ENCODE measurements at regions of chrX and their contacts with region 1.

Region 1: DNA sequence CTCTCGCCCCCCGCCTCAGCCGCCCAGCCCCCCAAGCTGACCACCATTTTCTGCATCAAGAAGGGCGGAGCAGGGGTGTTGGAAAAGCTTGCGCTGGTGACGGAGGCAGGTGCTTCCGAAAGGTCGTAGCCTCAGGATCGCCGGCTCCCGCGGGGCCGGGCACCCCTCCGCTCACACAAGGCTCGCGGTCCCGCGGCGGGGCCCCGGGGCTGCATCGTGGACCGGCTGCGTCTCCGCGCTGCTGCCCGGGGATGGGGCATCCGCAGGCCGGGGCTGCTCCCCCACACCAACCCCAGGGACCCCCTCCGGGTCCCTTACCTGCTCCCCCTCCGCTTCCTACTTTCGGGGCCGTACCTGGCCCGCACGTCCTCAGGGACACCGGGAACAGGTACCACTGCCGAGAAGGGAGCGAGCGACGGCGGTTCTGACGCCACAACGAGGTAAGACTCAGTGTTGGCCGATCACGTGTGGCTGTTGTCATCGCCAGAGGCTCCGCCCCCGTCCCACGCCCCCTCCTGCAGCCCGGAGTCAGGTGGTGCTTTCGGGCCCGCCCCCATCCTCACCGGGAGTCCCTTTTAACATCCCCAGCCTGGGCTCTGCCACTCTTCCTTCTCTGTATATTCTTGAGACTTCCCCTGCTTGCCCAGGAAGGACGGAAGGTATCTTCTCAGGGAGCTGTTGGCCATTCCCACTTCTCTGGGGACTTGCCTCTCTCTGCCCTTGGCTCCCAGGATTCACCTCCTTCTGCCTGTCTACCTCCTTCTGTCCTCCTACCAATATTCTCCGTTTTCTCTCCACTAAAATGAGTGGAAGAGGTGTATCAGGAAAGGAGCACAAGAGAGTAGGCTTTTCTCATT is at the start of gene BEX2:
- DNase-seq: peak; percentile 93
- H3K4me3 Mint-ChIP-seq: peak within 1 kb of the TSS; percentile 77
- H3K27ac Mint-ChIP-seq: peak within 1 kb of the TSS; percentile 56
- H3K4me1 Mint-ChIP-seq: no peaks in the 10 kb centered on the region
- H3K27me3 Mint-ChIP-seq: peaks cover 2% of the 10 kb centered on the region
- total RNA-seq, gene BEX2: 3.4 and 3.6 TPM in 2 replicates

Region 2: DNA sequence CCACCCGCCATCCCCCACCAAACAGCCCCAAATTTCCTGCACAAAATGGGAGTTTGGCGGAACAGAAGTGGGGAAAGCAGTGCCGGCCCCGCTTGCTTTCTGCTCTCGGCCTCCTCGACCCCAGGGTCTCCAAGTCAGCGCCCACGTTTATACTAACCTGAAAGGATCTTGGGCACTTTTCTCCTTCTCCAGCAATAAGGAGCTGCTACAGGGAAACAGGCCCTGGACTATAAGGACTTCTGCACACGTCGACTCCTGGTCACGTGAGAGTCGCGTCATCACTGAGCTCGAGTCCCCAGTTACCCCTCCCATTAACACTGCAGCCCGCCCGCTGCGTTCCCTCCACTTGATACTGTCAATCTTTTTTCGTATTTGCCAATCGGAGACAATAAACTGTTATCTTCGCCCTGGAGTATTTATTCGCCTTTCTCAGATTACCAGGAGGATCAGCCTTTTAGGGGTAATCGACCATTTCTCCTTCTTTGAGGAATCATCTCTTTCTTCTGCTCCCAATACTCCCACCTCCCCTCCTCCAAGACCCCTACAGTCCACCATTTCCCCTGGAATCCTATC is 55.8 kb before region 1 on chrX and contains the start of gene TCEAL8:
- intact Hi-C with region 1: loop called (anchors 5 kb)
- DNase-seq: peak; percentile 86
- H3K4me3 Mint-ChIP-seq: peak within 1 kb of the TSS; percentile 98
- H3K27ac Mint-ChIP-seq: peak within 1 kb of the TSS; percentile 96
- H3K4me1 Mint-ChIP-seq: peaks cover 14% of the 10 kb centered on the region
- H3K27me3 Mint-ChIP-seq: peaks cover 6% of the 10 kb centered on the region
- total RNA-seq, gene TCEAL8: 22.1 and 23.5 TPM in 2 replicates

Measured in activated CD4-positive, alpha-beta T cell treated with anti-CD3 and anti-CD28 coated beads, Interleukin-2, amount 10 ng/mL, durations not matched to agents 24 days and 14 days (primary cell).